OCI-LY7 (cell line): ENCODE measurements at regions of chr16 and their contacts with region 1.

Region 1: DNA sequence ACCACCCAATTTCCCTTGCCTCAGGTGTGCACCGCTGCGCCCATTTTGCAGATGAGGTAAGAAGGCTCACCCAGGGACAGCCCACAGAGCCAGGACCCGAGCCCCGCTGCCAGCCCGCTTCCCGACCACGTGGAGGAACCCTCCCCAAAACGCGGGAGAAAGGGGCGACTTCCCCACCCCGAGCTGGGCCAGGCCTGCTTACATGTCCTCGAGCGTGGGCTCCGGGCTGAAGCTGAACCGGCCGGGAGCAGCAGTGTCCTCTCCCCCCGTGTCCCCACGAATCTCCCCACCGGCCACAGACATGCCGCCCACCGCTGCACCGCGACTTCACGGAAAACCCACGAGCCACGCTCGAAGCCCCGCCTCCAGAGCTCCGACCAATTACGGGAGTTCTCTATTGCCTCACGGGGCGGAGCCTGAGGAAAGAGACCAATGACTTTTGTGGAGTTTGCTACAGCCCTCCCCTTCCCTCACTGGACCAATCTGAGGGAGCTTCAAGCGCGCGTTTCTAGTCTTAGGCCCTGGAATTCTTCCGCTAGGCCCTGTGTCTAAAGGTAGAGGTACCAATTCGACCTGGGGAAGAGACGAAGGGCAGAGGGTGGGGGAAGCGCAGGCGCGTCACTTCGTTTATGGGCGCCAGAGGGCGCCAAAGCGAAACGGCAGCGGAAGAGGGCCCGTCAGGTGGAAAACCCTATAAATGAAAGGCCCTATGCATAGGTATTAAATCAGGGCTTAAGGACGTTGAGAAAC is at the start of gene DCTPP1:
- DNase-seq: peak; percentile 100
- H3K4me3 ChIP-seq: peak within 1 kb of the TSS; percentile 80
- H3K27ac ChIP-seq: peak within 1 kb of the TSS; percentile 70
- H3K4me1 ChIP-seq: peaks cover 21% of the 10 kb centered on the region
- CTCF ChIP-seq: peak; percentile 96
- total RNA-seq, gene DCTPP1: 90.2 and 92.5 TPM in 2 replicates

Region 2: GRCh38 chr16:30472328-30472942 is 42.6 kb after region 1 on chr16 and contains the start of gene ITGAL:
- CTCF ChIA-PET with region 1: no interaction called
- POLR2A ChIA-PET with region 1: interaction called, 7 read pairs
- intact Hi-C with region 1: loop called (anchors 1 kb)
- DNase-seq: peak; percentile 90
- H3K4me3 ChIP-seq: peak within 1 kb of the TSS; percentile 77
- H3K27ac ChIP-seq: peak within 1 kb of the TSS; percentile 95
- H3K4me1 ChIP-seq: peaks cover 61% of the 10 kb centered on the region
- CTCF ChIP-seq: no peak
- total RNA-seq, gene ITGAL: 30.7 and 40.2 TPM in 2 replicates

Region 3: DNA sequence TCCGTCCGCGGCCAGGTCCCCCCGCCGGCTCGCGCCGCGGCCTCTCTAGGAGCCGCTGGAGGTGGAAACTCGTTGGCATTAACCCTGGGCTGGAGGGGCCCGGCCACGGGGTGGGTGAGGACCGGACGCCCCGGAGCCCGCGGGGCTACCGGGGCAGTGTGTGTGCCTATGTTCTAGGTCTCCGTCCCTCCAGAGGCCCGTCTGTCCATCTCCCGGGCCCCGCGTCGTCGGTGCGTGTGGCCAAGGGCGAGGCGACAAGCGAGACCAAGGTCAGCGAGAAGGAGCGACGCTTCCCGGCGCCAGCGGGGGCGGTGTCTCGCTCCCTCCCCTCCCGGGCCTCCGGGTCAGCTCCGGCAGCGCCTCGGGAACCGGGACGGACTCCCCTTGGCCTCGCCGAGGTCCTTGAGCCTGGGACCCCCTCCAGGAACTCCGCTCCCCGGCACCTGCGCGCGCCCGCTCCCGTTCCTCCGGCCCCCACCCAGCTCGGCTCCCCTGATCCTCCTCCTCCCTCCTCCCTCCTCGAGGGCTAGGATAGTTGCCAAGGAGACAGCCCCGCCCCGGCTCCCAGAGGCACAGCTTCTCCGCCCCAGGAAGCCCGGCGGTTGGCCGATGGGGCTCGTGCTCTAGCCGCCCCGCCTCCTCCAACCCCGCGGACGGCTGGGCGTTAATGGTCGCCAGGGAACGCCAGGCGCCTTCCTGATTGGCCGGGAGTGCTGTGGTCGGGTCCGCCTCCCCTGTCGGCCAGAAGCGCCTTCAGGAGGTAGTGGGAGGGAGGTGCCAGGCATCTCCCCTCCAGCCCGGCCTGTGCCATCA is 97.2 kb after region 1 on chr16:
- CTCF ChIA-PET with region 1: interaction called, 7 read pairs
- POLR2A ChIA-PET with region 1: interaction called, 3 read pairs
- intact Hi-C with region 1: loop called (anchors 1 kb)
- DNase-seq: peak; percentile 98
- H3K4me3 ChIP-seq: peak overlapping the region; percentile 84
- H3K27ac ChIP-seq: peak overlapping the region; percentile 86
- H3K4me1 ChIP-seq: peaks cover 27% of the 10 kb centered on the region
- CTCF ChIP-seq: peak; percentile 48

Region 4: GRCh38 chr16:30534368-30535105 is 104.7 kb after region 1 on chr16 and contains the start of gene ZNF747:
- CTCF ChIA-PET with region 1: no interaction called
- POLR2A ChIA-PET with region 1: interaction called, 7 read pairs
- intact Hi-C with region 1: loop called (anchors 1 kb)
- DNase-seq: peak; percentile 94
- H3K4me3 ChIP-seq: peak within 1 kb of the TSS; percentile 75
- H3K27ac ChIP-seq: peak within 1 kb of the TSS; percentile 82
- H3K4me1 ChIP-seq: peaks cover 34% of the 10 kb centered on the region
- CTCF ChIP-seq: no peak
- total RNA-seq, gene ZNF747: 15.7 and 22.2 TPM in 2 replicates

Region 5: GRCh38 chr16:30602616-30603277 is 172.9 kb after region 1 on chr16:
- CTCF ChIA-PET with region 1: interaction called, 8 read pairs
- POLR2A ChIA-PET with region 1: no interaction called
- intact Hi-C with region 1: loop called (anchors 1 kb)
- DNase-seq: no peak
- H3K4me3 ChIP-seq: no peak overlapping the region
- H3K27ac ChIP-seq: no peak overlapping the region
- H3K4me1 ChIP-seq: peaks cover 4% of the 10 kb centered on the region
- CTCF ChIP-seq: no peak

Region 6: GRCh38 chr16:30609926-30610839 is 180.3 kb after region 1 on chr16 and contains the start of gene ZNF689:
- CTCF ChIA-PET with region 1: no interaction called
- POLR2A ChIA-PET with region 1: interaction called, 3 read pairs
- intact Hi-C with region 1: loop called (anchors 5 kb)
- DNase-seq: peak; percentile 98
- H3K4me3 ChIP-seq: peak within 1 kb of the TSS; percentile 91
- H3K27ac ChIP-seq: peak within 1 kb of the TSS; percentile 70
- H3K4me1 ChIP-seq: peaks cover 20% of the 10 kb centered on the region
- CTCF ChIP-seq: no peak; the same call in 1 of the 2 replicates
- total RNA-seq, gene ZNF689: 13.1 and 15.0 TPM in 2 replicates

Region 7: GRCh38 chr16:30628627-30629540 is 199.0 kb after region 1 on chr16:
- CTCF ChIA-PET with region 1: interaction called, 11 read pairs
- POLR2A ChIA-PET with region 1: no interaction called
- intact Hi-C with region 1: loop called (anchors 1 kb)
- DNase-seq: peak; percentile 84
- H3K4me3 ChIP-seq: no peak overlapping the region
- H3K27ac ChIP-seq: no peak overlapping the region
- H3K4me1 ChIP-seq: peaks cover 15% of the 10 kb centered on the region
- CTCF ChIP-seq: peak; percentile 97

Region 8: DNA sequence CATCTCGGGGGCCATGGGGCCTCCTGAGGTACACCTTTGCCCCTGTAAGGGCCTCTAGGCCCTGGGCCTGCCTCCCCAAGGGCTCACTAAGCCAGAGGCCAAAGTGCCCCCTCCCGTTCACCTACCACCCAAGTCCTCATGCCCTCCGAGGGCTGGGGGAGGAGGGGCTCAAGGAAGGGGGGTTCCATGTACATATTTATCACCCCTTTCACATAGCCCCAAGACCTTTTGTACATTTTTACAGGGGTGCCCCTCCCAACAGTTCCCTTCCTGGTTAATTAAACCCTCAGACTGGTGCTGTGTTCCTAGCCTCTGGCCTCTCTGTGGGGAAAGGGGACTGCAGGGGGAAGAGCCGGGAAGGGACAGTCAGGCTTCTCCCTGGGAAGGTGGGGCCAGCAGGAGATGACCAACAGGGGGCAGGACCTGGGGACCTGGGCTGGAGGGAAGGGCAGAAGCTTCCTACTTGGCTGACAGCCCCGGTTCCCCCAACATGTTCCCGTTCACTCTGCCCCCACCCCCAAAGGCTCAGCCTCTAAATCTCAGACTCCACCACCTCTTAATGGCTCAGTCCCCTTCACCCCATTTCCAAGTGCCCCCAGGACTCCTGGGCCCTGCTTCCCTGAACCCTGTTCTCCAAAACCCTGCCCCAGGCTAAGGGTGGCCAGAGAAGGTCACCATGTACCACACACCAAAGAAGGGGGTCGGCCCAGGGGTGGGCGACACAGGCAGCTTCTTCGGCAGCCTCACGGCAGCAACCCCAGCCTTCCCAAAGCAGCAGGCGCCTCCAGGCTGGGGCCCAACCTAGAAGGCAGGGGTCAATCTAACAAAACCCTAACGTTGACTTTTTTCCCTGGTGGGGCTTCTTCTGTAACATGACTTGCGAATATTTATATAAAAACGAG is 240.3 kb after region 1 on chr16:
- CTCF ChIA-PET with region 1: no interaction called
- POLR2A ChIA-PET with region 1: no interaction called
- intact Hi-C with region 1: no loop called
- DNase-seq: no peak
- H3K4me3 ChIP-seq: no peak overlapping the region
- H3K27ac ChIP-seq: no peak overlapping the region
- H3K4me1 ChIP-seq: no peaks in the 10 kb centered on the region
- CTCF ChIP-seq: no peak

Region 9: GRCh38 chr16:31253642-31254045 is 823.8 kb after region 1 on chr16:
- CTCF ChIA-PET with region 1: no interaction called
- POLR2A ChIA-PET with region 1: no interaction called
- intact Hi-C with region 1: no loop called
- DNase-seq: no peak
- H3K4me3 ChIP-seq: no peak overlapping the region
- H3K27ac ChIP-seq: no peak overlapping the region
- H3K4me1 ChIP-seq: no peaks in the 10 kb centered on the region
- CTCF ChIP-seq: no peak